ENCODE measurements at regions of chr1 and their contacts with region 1.

Region 1: GRCh38 chr1:52296345-52296744 is 69.7 kb downstream of the CC2D1B start:
- DNase-seq: peak; percentile 44 to 67 (median 66)
- H3K4me3 ChIP-seq: no peak overlapping the region
- H3K27ac ChIP-seq: no peak overlapping the region
- H3K4me1 ChIP-seq: no peaks in the 10 kb centered on the region
- H3K27me3 ChIP-seq: peaks cover 0 to 2% (median 0%) of the 10 kb centered on the region in 5 experiments

Region 2: GRCh38 chr1:52127181-52128180 is 168.9 kb before region 1 on chr1:
- CTCF ChIA-PET with region 1: interaction called, 13 read pairs
- POLR2A ChIA-PET with region 1: no interaction called
- DNase-seq: peak; percentile 50 to 71 (median 57)
- H3K4me3 ChIP-seq: no peak overlapping the region
- H3K27ac ChIP-seq: no peak overlapping the region
- H3K4me1 ChIP-seq: no peaks in the 10 kb centered on the region
- H3K27me3 ChIP-seq: peaks cover 0 to 7% (median 2%) of the 10 kb centered on the region in 5 experiments

Region 3: DNA sequence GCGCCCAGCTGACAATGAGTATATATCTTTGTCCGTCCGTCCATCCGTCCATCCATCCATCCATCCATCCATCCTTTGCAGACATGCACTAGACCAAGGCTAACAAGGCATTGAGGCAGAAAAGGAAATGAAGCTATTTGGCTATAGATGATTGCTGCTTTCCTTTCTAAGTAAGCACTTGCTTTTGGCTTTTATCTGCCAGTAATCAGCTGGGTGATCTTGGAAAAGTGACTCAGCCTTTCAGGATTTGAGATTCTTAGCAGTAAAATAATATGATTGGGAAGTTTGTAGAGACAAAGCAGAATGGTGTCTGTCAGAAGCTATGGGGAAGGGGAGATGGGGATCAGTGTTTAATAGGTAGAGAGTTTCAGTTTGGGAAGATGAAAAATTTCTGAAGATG is 131.7 kb before region 1 on chr1:
- CTCF ChIA-PET with region 1: no interaction called
- POLR2A ChIA-PET with region 1: no interaction called
- DNase-seq: no peak
- H3K4me3 ChIP-seq: no peak overlapping the region
- H3K27ac ChIP-seq: no peak overlapping the region
- H3K4me1 ChIP-seq: no peaks in the 10 kb centered on the region
- H3K27me3 ChIP-seq: peaks cover 0 to 2% (median 0%) of the 10 kb centered on the region in 5 experiments

Region 4: GRCh38 chr1:52216907-52217458 is 79.4 kb before region 1 on chr1:
- CTCF ChIA-PET with region 1: no interaction called
- POLR2A ChIA-PET with region 1: no interaction called
- DNase-seq: no peak
- H3K4me3 ChIP-seq: no peak overlapping the region
- H3K27ac ChIP-seq: no peak overlapping the region
- H3K4me1 ChIP-seq: no peaks in the 10 kb centered on the region
- H3K27me3 ChIP-seq: no peaks in the 10 kb centered on the region